ENCODE measurements at regions of chr6 and their contacts with region 1.

Region 1: DNA sequence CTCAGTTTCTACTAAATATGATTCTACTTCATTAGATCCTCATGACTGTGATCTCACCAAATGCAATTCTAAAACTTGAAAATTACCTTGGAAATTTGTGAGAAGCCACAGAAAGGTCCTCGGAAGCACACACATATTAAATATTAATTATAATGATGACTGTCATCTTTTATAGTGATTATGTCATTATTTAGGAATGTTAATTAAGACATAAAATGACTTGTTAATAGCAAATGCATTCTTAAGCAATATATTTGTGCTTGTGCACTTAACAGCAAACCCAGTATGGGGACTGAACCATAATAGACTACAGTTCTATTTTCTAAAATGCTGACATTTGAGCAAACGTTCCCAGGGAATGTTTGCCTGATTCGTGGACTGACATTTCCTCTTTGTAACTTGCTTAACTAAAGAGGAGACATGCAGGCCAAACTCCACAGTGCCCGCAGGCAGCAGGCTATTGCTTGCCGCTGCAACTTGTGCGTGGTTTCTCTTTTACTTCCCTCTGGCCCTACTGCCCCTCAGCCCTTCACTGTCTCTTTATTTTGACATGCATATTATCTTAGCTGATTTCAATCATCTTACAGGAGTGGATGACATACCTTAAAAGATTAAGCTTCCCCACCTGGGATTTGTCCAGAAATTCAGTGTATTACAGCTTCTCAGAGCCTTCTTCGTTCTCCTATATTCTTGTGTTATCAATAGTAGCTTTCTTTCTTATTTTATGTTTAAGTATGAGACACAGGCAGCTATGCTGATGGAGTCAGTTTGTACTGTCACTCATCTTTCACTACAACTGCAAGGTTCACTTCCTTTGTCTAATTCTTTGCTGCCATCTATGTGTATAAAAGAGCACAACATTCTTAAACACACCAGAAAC is 141.5 kb downstream of the GMDS start:
- DNase-seq: peak; percentile 43
- ATAC-seq: peak; percentile 69
- H3K4me3 ChIP-seq: no peak overlapping the region
- H3K27ac ChIP-seq: no peak overlapping the region
- H3K4me1 ChIP-seq: peaks cover 5% of the 10 kb centered on the region
- H3K27me3 ChIP-seq: no peaks in the 10 kb centered on the region
- CTCF ChIP-seq: peak; percentile 75
- EP300 ChIP-seq: no peak
- POLR2A ChIP-seq: no peak
- RAD21 ChIP-seq: no peak

Region 2: GRCh38 chr6:1604158-1605030 is 499.5 kb before region 1 on chr6:
- CTCF ChIA-PET with region 1: interaction called, 15 read pairs
- POLR2A ChIA-PET with region 1: no interaction called
- in situ Hi-C with region 1: loop called (anchors 5 kb)
- intact Hi-C with region 1: no loop called
- DNase-seq: peak; percentile 54
- ATAC-seq: peak; percentile 89
- H3K4me3 ChIP-seq: peak overlapping the region; percentile 44 to 77 (median 56)
- H3K27ac ChIP-seq: no peak overlapping the region
- H3K4me1 ChIP-seq: peaks cover 57% of the 10 kb centered on the region
- H3K27me3 ChIP-seq: peaks cover 32 to 97% of the 10 kb centered on the region in 2 experiments
- CTCF ChIP-seq: peak; percentile 92
- EP300 ChIP-seq: no peak
- POLR2A ChIP-seq: no peak
- RAD21 ChIP-seq: peak; percentile 99

Region 3: DNA sequence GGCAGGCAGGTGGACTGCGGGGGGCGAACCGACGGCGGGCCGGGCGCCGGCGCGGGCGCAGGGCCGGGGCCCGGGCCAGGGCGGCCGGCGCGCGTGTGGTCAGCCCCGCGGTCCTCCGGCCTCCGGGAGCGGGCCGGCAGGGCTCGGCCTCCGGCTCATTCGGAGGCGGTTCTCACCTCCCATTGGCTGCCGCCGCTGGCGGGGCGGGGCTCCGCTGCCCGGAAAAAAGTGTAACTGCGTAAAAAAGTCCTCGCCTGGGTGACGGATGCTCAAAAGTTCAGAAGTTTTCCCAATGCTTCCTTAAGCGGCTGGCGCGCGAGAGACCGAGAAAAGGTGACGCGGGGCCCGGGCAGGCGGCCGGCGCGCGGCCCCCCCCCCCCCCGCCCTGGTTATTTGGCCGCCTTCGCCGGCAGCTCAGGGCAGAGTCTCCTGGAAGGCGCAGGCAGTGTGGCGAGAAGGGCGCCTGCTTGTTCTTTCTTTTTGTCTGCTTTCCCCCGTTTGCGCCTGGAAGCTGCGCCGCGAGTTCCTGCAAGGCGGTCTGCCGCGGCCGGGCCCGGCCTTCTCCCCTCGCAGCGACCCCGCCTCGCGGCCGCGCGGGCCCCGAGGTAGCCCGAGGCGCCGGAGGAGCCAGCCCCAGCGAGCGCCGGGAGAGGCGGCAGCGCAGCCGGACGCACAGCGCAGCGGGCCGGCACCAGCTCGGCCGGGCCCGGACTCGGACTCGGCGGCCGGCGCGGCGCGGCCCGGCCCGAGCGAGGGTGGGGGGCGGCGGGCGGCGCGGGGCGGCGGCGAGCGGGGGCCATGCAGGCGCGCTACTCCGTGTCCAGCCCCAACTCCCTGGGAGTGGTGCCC is 494.0 kb before region 1 on chr6 and contains the start of gene FOXC1:
- CTCF ChIA-PET with region 1: interaction called, 15 read pairs
- POLR2A ChIA-PET with region 1: no interaction called
- in situ Hi-C with region 1: loop called (anchors 5 kb)
- intact Hi-C with region 1: no loop called
- DNase-seq: peak; percentile 71
- ATAC-seq: peak; percentile 71
- H3K4me3 ChIP-seq: peak within 1 kb of the TSS; percentile 57 to 73 (median 67)
- H3K27ac ChIP-seq: no peak within 1 kb of the TSS
- H3K4me1 ChIP-seq: peaks cover 48% of the 10 kb centered on the region
- H3K27me3 ChIP-seq: peaks cover 28 to 49% of the 10 kb centered on the region in 2 experiments
- CTCF ChIP-seq: no peak
- EP300 ChIP-seq: no peak
- POLR2A ChIP-seq: no peak
- RAD21 ChIP-seq: no peak
- total RNA-seq, gene FOXC1: 0.46 and 0.55 TPM in 2 replicates

Region 4: GRCh38 chr6:1792989-1793388 is 310.9 kb before region 1 on chr6:
- CTCF ChIA-PET with region 1: no interaction called
- POLR2A ChIA-PET with region 1: no interaction called
- in situ Hi-C with region 1: no loop called
- intact Hi-C with region 1: loop called (anchors 10 kb)
- DNase-seq: peak; percentile 53
- ATAC-seq: peak; percentile 96
- H3K4me3 ChIP-seq: no peak overlapping the region
- H3K27ac ChIP-seq: no peak overlapping the region
- H3K4me1 ChIP-seq: 0 out of 2 replicates have a peak, but pooled peaks cover 6% of the 10 kb centered on the region
- H3K27me3 ChIP-seq: no peaks in the 10 kb centered on the region
- CTCF ChIP-seq: peak; percentile 49
- EP300 ChIP-seq: no peak
- POLR2A ChIP-seq: no peak
- RAD21 ChIP-seq: no peak

Region 5: GRCh38 chr6:2072450-2072849 is 31.4 kb before region 1 on chr6:
- CTCF ChIA-PET with region 1: no interaction called
- POLR2A ChIA-PET with region 1: no interaction called
- in situ Hi-C with region 1: no loop called
- intact Hi-C with region 1: no loop called
- DNase-seq: no peak
- ATAC-seq: no peak
- H3K4me3 ChIP-seq: no peak overlapping the region
- H3K27ac ChIP-seq: no peak overlapping the region
- H3K4me1 ChIP-seq: no peaks in the 10 kb centered on the region
- H3K27me3 ChIP-seq: no peaks in the 10 kb centered on the region
- CTCF ChIP-seq: no peak
- EP300 ChIP-seq: no peak
- POLR2A ChIP-seq: no peak
- RAD21 ChIP-seq: no peak

Measured in HepG2 (cell line).